Mammary epithelial cell (primary cell): ENCODE measurements at regions of chr22 and their contacts with region 1.

Region 1: GRCh38 chr22:40898850-40899357 is 37.0 kb upstream of the DNAJB7 start:
- DNase-seq: peak; percentile 52
- H3K4me3 ChIP-seq: no peak overlapping the region
- H3K27ac ChIP-seq: no peak overlapping the region
- H3K4me1 ChIP-seq: peaks cover 2% of the 10 kb centered on the region
- H3K27me3 ChIP-seq: no peaks in the 10 kb centered on the region
- CTCF ChIP-seq: peak; percentile 56 to 59

Region 2: GRCh38 chr22:40679964-40680818 is 218.7 kb before region 1 on chr22:
- CTCF ChIA-PET with region 1: interaction called, 4 read pairs
- dilution Hi-C with region 1: no loop called
- in situ Hi-C with region 1: no loop called
- intact Hi-C with region 1: loop called (anchors 1 kb)
- DNase-seq: no peak
- H3K4me3 ChIP-seq: no peak overlapping the region
- H3K27ac ChIP-seq: no peak overlapping the region
- H3K4me1 ChIP-seq: peaks cover 27% of the 10 kb centered on the region
- H3K27me3 ChIP-seq: no peaks in the 10 kb centered on the region
- CTCF ChIP-seq: peak in 1 of 2 donors; percentile 10

Region 3: GRCh38 chr22:40950475-40950961 is 51.6 kb after region 1 on chr22:
- CTCF ChIA-PET with region 1: no interaction called
- dilution Hi-C with region 1: no loop called
- in situ Hi-C with region 1: no loop called
- intact Hi-C with region 1: no loop called
- DNase-seq: no peak
- H3K4me3 ChIP-seq: peak overlapping the region; percentile 73 to 99 (median 99)
- H3K27ac ChIP-seq: peak overlapping the region; percentile 98
- H3K4me1 ChIP-seq: peaks cover 11% of the 10 kb centered on the region
- H3K27me3 ChIP-seq: no peaks in the 10 kb centered on the region
- CTCF ChIP-seq: no peak

Region 4: DNA sequence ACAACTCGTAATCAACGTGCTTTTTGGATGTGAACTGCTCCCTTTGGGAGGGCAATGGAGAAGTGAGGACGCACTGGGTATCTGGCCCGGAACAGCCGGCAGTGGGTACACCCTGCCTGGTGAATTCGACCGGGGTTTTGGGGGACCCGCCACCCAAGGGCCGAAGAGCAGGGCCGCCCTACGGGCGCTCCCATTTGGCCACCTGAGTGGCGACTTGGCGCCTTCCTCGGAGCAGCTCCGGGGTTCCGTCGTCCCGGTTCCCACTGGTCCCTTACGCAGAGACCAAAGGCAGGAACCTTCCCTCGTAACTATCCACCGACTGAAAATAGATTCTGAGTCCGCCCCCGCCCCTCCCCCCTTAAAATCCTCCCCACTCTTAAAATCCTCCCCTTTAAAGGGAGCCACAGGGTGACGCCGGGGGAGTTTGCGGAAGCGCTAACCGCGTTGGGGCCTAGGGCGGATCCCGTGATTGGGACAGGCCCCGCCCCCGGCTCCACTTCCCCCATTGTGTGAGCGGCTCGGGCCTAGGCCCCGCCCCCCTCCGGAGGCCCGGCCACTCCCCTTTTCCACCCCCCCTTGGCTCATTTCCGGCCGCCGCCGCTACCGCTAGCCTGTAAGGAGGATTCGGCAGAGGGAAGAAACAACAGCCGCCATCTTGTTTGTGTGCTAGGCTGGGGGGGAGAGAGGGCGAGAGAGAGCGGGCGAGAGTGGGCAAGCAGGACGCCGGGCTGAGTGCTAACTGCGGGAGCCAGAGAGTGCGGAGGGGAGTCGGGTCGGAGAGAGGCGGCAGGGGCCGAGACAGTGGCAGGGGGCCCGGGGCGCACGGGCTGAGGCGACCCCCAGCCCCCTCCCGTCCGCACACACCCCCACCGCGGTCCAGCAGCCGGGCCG is 192.5 kb after region 1 on chr22:
- CTCF ChIA-PET with region 1: no interaction called
- dilution Hi-C with region 1: no loop called
- in situ Hi-C with region 1: no loop called
- intact Hi-C with region 1: no loop called
- DNase-seq: peak; percentile 98
- H3K4me3 ChIP-seq: peak overlapping the region; percentile 92 to 98 (median 96)
- H3K27ac ChIP-seq: peak overlapping the region; percentile 88
- H3K4me1 ChIP-seq: peaks cover 6% of the 10 kb centered on the region
- H3K27me3 ChIP-seq: no peaks in the 10 kb centered on the region
- CTCF ChIP-seq: no peak